ENCODE measurements at regions of chr19 and their contacts with region 1.

Region 1: GRCh38 chr19:49877020-49877878 is at the starts of genes AKT1S1 and TBC1D17:
- DNase-seq: peak; percentile 99
- H3K4me3 Mint-ChIP-seq: no peak within 1 kb of the TSS
- H3K27ac Mint-ChIP-seq: no peak within 1 kb of the TSS
- H3K4me1 Mint-ChIP-seq: peaks cover 22% of the 10 kb centered on the region
- H3K27me3 Mint-ChIP-seq: no peaks in the 10 kb centered on the region
- total RNA-seq, gene AKT1S1: 26.6 and 29.7 TPM in 2 replicates
- total RNA-seq, gene TBC1D17: 40.0 and 42.3 TPM in 2 replicates

Region 2: GRCh38 chr19:49497047-49497788 is 380.0 kb before region 1 on chr19:
- intact Hi-C with region 1: loop called (anchors 1 kb)
- DNase-seq: peak; percentile 73
- H3K4me3 Mint-ChIP-seq: peak overlapping the region; percentile 98
- H3K27ac Mint-ChIP-seq: peak overlapping the region; percentile 94
- H3K4me1 Mint-ChIP-seq: peaks cover 44% of the 10 kb centered on the region
- H3K27me3 Mint-ChIP-seq: no peaks in the 10 kb centered on the region

Region 3: GRCh38 chr19:49640113-49640898 is 236.9 kb before region 1 on chr19 and contains the start of gene RRAS:
- intact Hi-C with region 1: loop called (anchors 1 kb)
- DNase-seq: peak; percentile 100
- H3K4me3 Mint-ChIP-seq: peak within 1 kb of the TSS; percentile 91
- H3K27ac Mint-ChIP-seq: peak within 1 kb of the TSS; percentile 97
- H3K4me1 Mint-ChIP-seq: peaks cover 47% of the 10 kb centered on the region
- H3K27me3 Mint-ChIP-seq: peaks cover 1% of the 10 kb centered on the region
- total RNA-seq, gene RRAS: 4.9 and 6.2 TPM in 2 replicates

Region 4: DNA sequence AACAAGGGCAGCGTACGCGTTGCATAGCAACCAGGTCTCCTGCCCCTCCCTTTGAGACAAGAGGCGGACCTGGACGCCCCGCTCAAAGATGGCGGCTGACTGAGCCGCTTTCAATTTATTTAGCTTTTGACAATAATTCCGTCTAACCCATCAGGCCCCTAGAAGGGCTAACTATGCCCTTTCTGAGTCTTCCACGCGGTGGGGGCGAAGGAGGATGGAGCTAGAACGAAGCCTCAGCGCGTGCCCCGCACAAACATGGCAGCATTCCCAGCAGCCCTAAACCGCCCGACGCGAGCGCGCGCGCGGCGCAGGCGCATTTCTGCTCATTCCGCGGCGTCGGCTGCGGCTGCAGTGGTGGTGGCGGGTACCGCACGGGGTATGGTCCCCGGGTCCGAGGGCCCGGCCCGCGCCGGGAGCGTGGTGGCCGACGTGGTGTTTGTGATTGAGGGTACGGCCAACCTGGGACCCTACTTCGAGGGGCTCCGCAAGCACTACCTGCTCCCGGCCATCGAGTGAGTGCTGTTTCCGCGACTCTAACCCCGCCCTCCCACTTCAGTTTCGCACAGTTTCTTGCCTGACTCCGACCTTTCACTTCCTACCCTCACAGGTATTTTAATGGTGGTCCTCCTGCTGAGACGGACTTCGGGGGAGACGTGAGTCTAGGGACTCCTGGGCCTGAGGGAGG is 59.1 kb before region 1 on chr19 and contains the start of gene MED25:
- intact Hi-C with region 1: loop called (anchors 2 kb)
- DNase-seq: peak; percentile 89
- H3K4me3 Mint-ChIP-seq: peak within 1 kb of the TSS; percentile 93
- H3K27ac Mint-ChIP-seq: peak within 1 kb of the TSS; percentile 93
- H3K4me1 Mint-ChIP-seq: peaks cover 12% of the 10 kb centered on the region
- H3K27me3 Mint-ChIP-seq: no peaks in the 10 kb centered on the region
- total RNA-seq, gene MED25: 44.0 and 49.6 TPM in 2 replicates

Region 5: GRCh38 chr19:49896863-49897621 is 19.8 kb after region 1 on chr19 and contains the start of gene IL4I1:
- intact Hi-C with region 1: loop called (anchors 1 kb)
- DNase-seq: peak; percentile 40
- H3K4me3 Mint-ChIP-seq: peak within 1 kb of the TSS; percentile 73
- H3K27ac Mint-ChIP-seq: peak within 1 kb of the TSS; percentile 98
- H3K4me1 Mint-ChIP-seq: peaks cover 30% of the 10 kb centered on the region
- H3K27me3 Mint-ChIP-seq: no peaks in the 10 kb centered on the region
- total RNA-seq, gene IL4I1: 42.3 and 42.4 TPM in 2 replicates

Region 6: GRCh38 chr19:50025024-50025789 is 148.0 kb after region 1 on chr19 and contains the start of gene VRK3:
- intact Hi-C with region 1: loop called (anchors 1 kb)
- DNase-seq: peak; percentile 98
- H3K4me3 Mint-ChIP-seq: peak within 1 kb of the TSS; percentile 91
- H3K27ac Mint-ChIP-seq: peak within 1 kb of the TSS; percentile 96
- H3K4me1 Mint-ChIP-seq: peaks cover 32% of the 10 kb centered on the region
- H3K27me3 Mint-ChIP-seq: no peaks in the 10 kb centered on the region
- total RNA-seq, gene VRK3: 60.8 and 67.7 TPM in 2 replicates

Measured in activated T-helper 2 cell treated with anti-CD3 and anti-CD28 coated beads, Interferon-gamma antibody, Interleukin-2, Interleukin-4, amounts not matched to agents 10 μg/mL and 5 μg/mL and 100 μg/mL, durations not matched to agents 14 hours and 24 hours and 36 hours (primary cell).